GM12878 (cell line): ENCODE measurements at regions of chr16 and their contacts with region 1.

Region 1: GRCh38 chr16:74107795-74108618 is 188.6 kb upstream of the PSMD7 start:
- DNase-seq: peak; percentile 16
- ATAC-seq: peak; percentile 89
- H3K4me3 ChIP-seq: no peak overlapping the region
- H3K27ac ChIP-seq: no peak overlapping the region
- H3K4me1 ChIP-seq: no peaks in the 10 kb centered on the region
- H3K27me3 ChIP-seq: no peaks in the 10 kb centered on the region
- CTCF ChIP-seq: peak; percentile 63 to 80 (median 75)
- EP300 ChIP-seq: no peak
- POLR2A ChIP-seq: no peak
- RAD21 ChIP-seq: 0 out of 2 replicates have a peak, but pooled peaks have one; percentile 28

Region 2: DNA sequence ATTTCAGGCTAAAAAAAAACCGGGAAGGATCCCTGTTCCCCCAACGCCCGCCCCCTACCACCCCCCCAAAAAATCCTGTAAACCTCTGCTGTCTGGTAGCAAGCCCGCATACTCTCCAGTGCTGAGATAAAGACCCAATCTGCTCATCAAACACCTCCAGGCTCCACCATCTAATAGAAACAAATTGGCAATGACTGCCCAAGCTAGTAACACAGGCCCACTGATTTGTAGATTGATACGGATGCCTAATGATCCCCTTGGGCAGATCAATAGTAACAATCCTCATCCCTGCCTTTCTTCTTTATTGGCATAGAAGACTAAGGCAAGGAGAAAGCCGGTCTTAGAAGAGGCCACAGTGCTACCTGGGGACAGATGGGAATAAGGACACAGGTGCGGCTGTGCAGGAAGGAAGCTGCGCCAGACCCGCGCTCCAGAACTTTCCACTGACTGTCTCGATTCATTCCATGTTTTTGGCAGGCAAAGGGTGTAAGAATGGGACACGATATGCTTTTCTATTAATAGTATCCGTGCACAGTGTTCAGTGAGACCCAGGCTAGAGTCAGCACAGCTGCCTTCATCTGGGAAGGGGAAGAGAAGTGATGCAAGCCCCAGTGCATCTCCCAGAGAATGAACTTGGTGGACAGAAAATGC is 219.0 kb before region 1 on chr16:
- CTCF ChIA-PET with region 1: no interaction called
- POLR2A ChIA-PET with region 1: no interaction called
- RAD21 ChIA-PET with region 1: no interaction called
- SMC1A ChIA-PET with region 1: no interaction called
- in situ Hi-C with region 1: no loop called
- intact Hi-C with region 1: loop called (anchors 10 kb)
- DNase-seq: no peak
- ATAC-seq: no peak
- H3K4me3 ChIP-seq: no peak overlapping the region
- H3K27ac ChIP-seq: no peak overlapping the region
- H3K4me1 ChIP-seq: no peaks in the 10 kb centered on the region
- H3K27me3 ChIP-seq: 0 out of 4 replicates have a peak, but pooled peaks cover 0 to 1% of the 10 kb centered on the region in 2 experiments
- CTCF ChIP-seq: no peak
- EP300 ChIP-seq: no peak
- POLR2A ChIP-seq: no peak
- RAD21 ChIP-seq: no peak

Region 3: GRCh38 chr16:74034862-74035261 is 73.1 kb before region 1 on chr16:
- CTCF ChIA-PET with region 1: interaction called, 19 read pairs
- POLR2A ChIA-PET with region 1: interaction called, 3 read pairs
- RAD21 ChIA-PET with region 1: interaction called, 10 read pairs
- SMC1A ChIA-PET with region 1: no interaction called
- in situ Hi-C with region 1: no loop called
- intact Hi-C with region 1: loop called (anchors 1 kb)
- DNase-seq: no peak
- ATAC-seq: peak; percentile 79
- H3K4me3 ChIP-seq: no peak overlapping the region
- H3K27ac ChIP-seq: no peak overlapping the region
- H3K4me1 ChIP-seq: no peaks in the 10 kb centered on the region
- H3K27me3 ChIP-seq: no peaks in the 10 kb centered on the region
- CTCF ChIP-seq: peak; percentile 19 to 39 (median 33); a peak in 3 of 6 replicates
- EP300 ChIP-seq: no peak
- POLR2A ChIP-seq: no peak
- RAD21 ChIP-seq: peak; percentile 33

Region 4: GRCh38 chr16:74070237-74070636 is 37.8 kb before region 1 on chr16:
- CTCF ChIA-PET with region 1: interaction called, 85 read pairs
- POLR2A ChIA-PET with region 1: no interaction called
- RAD21 ChIA-PET with region 1: interaction called, 71 read pairs
- SMC1A ChIA-PET with region 1: interaction called, 99 read pairs
- in situ Hi-C with region 1: no loop called
- intact Hi-C with region 1: no loop called
- DNase-seq: no peak
- ATAC-seq: peak; percentile 73
- H3K4me3 ChIP-seq: no peak overlapping the region
- H3K27ac ChIP-seq: no peak overlapping the region
- H3K4me1 ChIP-seq: no peaks in the 10 kb centered on the region
- H3K27me3 ChIP-seq: no peaks in the 10 kb centered on the region
- CTCF ChIP-seq: no peak
- EP300 ChIP-seq: no peak
- POLR2A ChIP-seq: no peak
- RAD21 ChIP-seq: no peak

Region 5: DNA sequence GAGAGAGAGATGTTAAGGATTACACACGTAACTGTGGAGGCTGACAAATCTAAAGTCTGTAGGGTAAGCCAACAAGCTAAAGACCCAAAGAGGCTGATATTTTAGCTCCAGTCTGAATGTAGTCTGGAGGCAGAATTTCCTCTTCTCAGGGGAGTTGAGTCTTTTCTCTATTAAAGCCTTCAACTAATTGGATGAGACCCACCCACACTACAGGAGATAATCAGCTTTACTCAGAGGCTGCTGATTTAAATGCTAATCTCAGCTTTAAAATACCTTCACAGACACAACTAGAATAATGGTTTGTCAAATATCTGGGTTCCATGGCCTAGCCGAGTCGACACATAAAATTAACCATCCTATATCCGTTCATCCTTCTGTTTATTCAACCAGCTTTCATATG is 15.7 kb before region 1 on chr16:
- CTCF ChIA-PET with region 1: interaction called, 12 read pairs
- POLR2A ChIA-PET with region 1: no interaction called
- RAD21 ChIA-PET with region 1: interaction called, 5 read pairs
- SMC1A ChIA-PET with region 1: interaction called, 10 read pairs
- in situ Hi-C with region 1: no loop called
- intact Hi-C with region 1: no loop called
- DNase-seq: no peak
- ATAC-seq: no peak
- H3K4me3 ChIP-seq: no peak overlapping the region
- H3K27ac ChIP-seq: no peak overlapping the region
- H3K4me1 ChIP-seq: no peaks in the 10 kb centered on the region
- H3K27me3 ChIP-seq: no peaks in the 10 kb centered on the region
- CTCF ChIP-seq: no peak
- EP300 ChIP-seq: no peak
- POLR2A ChIP-seq: no peak
- RAD21 ChIP-seq: no peak